ENCODE measurements at regions of chr20 and their contacts with region 1.

Region 1: DNA sequence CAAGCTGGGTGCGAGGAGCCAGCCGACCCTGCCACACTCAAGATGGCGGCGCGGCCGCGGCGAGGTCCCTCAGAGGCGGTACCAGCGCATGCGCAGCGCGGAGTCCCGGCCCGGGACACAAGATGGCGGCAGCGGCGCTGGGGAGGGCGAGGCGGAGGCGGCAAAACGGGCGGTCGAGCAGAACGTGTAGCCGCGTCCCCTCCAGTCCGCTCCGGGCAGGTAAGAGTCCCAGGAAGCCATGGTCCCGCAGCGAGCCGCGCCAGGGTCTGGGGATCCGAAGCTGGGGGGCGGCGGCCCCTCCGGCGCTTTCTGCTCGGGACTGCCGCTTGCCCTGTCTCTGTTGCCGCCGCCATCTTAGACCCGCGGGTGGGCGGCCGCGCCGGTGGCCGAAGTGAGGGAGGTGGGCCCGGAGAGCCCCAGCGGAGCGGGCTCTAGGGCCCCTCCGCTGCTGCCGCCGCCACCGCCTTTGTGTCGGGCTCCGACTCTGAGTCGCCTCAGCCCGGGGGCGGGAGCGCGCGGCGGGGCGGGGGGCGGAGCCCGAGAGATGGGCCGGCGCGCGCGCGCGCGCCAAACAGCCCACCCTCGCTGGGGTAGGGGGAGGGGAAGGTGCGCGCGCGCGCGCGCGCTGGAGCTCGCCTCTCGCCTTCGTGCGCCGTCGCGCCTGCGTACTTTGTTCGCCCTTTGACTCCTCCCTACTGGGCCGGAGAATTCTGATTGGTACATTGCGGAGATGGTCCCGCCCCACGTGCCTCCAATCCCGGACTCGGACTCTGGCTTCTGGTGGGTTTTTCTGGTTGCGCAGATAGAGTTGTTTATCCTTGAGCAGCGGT is at the start of gene PCIF1:
- DNase-seq: peak; percentile 98 to 99 (median 99)
- ATAC-seq: peak; percentile 90 to 91 (median 90)
- H3K4me3 ChIP-seq: peak within 1 kb of the TSS; percentile 79 to 100 (median 99)
- H3K27ac ChIP-seq: peak within 1 kb of the TSS; percentile 99 to 100 (median 100)
- H3K4me1 ChIP-seq: peaks cover 0 to 28% (median 20%) of the 10 kb centered on the region in 12 donors
- H3K27me3 ChIP-seq: no peaks in the 10 kb centered on the region
- CTCF ChIP-seq: peak in 1 of 12 donors; percentile 12
- POLR2A ChIP-seq: peak; percentile 26 to 93
- total RNA-seq, gene PCIF1: 22.2 to 40.2 (median 28.2) TPM

Region 2: DNA sequence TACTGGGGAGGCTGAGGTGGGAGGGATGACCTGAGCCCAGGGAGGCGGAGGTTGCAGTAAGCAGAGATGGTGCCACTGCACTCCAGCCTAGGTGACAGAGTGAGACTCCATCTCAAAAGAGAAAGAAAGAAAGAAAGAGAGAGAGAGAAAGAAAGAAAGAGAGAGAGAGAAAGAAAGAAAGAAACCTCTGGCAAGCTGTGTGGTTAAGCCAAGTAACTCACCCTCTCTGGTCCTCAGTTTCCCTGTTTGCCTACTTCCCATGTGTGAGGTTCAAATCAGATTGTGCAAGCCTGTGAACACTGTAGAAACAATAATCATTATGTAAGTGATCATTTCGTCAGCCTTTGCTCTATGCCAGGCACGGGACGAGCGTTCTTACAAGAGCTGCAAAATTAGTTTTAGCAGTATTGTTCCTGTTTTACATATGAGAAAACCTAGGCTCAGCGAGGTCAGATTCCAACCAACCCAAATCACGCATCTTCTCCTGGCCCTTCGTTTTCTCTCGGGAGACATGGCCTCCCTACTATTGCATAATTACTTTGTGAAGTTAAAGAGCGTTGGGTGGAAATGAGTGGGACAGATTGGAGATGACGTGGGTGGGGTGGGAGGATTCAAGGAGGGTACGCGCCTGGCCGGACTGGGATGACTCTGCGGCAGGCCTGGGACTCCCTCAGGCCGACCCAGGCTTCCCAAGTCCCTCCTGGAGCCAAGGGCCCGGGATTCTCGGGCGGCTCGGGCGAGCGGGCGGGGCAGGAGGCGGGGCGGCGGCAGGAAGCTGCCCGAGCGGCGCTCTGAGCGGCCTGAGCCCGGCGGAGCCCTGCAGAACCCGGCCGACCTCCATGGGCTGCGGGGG is 101.5 kb before region 1 on chr20 and contains the start of gene SNX21:
- intact Hi-C with region 1: loop called in 2 of 10 experiments (anchors 10 kb)
- DNase-seq: peak; percentile 88 to 95 (median 92)
- ATAC-seq: peak; percentile 84 to 92 (median 88)
- H3K4me3 ChIP-seq: peak within 1 kb of the TSS; percentile 54 to 90 (median 73)
- H3K27ac ChIP-seq: peak within 1 kb of the TSS; percentile 89 to 99 (median 95)
- H3K4me1 ChIP-seq: peaks cover 0 to 53% (median 36%) of the 10 kb centered on the region in 12 donors
- H3K27me3 ChIP-seq: no peaks in the 10 kb centered on the region
- CTCF ChIP-seq: no peak
- POLR2A ChIP-seq: peak in 1 of 2 donors; percentile 48
- total RNA-seq, gene SNX21: 14.1 to 45.6 (median 21.4) TPM

Region 3: GRCh38 chr20:45857114-45857881 is 77.5 kb before region 1 on chr20 and contains the starts of genes ACOT8 and ZSWIM3:
- intact Hi-C with region 1: loop called in 1 of 10 experiments (anchors 2 kb)
- DNase-seq: peak; percentile 89 to 100 (median 98)
- ATAC-seq: peak; percentile 97 to 100 (median 98)
- H3K4me3 ChIP-seq: peak within 1 kb of the TSS; percentile 69 to 98 (median 92)
- H3K27ac ChIP-seq: peak within 1 kb of the TSS; percentile 7 to 94 (median 84)
- H3K4me1 ChIP-seq: peaks cover 3 to 37% (median 31%) of the 10 kb centered on the region in 12 donors
- H3K27me3 ChIP-seq: no peaks in the 10 kb centered on the region
- CTCF ChIP-seq: no peak
- POLR2A ChIP-seq: peak in 1 of 2 donors; percentile 82
- total RNA-seq, gene ACOT8: 22.5 to 57.8 (median 31.4) TPM
- total RNA-seq, gene ZSWIM3: 1.9 to 3.1 (median 2.4) TPM

Region 4: GRCh38 chr20:45890985-45891983 is 43.5 kb before region 1 on chr20 and contains the starts of genes CTSA and NEURL2:
- intact Hi-C with region 1: loop called in 9 of 10 experiments (anchors 1 to 5 kb)
- DNase-seq: peak; percentile 93 to 97 (median 95)
- ATAC-seq: peak; percentile 77 to 91 (median 86)
- H3K4me3 ChIP-seq: peak within 1 kb of the TSS; percentile 53 to 98 (median 80)
- H3K27ac ChIP-seq: peak within 1 kb of the TSS; percentile 74 to 97 (median 90)
- H3K4me1 ChIP-seq: peaks cover 3 to 37% (median 23%) of the 10 kb centered on the region in 12 donors
- H3K27me3 ChIP-seq: no peaks in the 10 kb centered on the region
- CTCF ChIP-seq: peak in 2 of 12 donors; percentile 3 to 7
- POLR2A ChIP-seq: peak in 1 of 2 donors; percentile 68
- total RNA-seq, gene CTSA: 62.5 to 214 (median 129) TPM
- total RNA-seq, gene NEURL2: 3.5 to 14.8 (median 10.8) TPM

Region 5: DNA sequence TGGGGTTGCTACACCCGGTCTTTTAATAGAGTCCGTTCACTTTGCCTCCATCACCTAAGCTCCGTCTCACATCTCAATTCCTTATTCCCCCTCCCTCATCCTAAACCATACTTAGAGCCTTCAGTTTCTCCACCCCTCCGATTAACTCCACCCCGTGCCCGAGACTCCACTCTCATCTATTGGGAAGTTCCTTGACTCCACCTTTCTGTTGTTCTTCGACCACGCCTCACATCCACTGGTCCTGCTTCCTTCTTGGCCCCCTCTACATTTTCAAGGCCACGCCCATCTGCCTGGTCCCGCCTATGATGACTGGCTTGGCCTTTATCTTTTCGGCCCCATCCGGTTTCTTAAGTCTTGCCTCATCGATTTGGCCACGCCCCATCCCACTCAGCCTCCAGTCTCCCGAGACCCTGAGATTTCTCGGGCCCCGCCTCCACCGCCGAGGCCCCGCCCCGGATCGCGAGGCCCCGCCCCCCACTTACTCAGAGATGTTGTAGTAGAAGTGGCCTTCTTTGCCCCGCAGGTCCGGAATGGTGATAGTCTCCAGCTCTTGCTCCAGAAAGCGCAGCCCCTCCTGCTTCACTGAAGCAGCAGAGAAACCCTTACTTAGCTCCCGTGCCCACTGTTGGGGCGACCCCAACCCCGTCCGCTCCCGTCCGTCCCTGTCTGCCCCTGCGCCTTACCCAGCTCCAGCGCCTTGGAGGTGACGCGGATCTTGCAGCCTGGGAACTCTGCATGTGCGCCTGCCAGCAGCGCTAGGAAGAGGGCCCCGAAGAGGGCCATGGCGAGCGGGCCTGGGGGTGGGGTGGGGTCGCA is 23.9 kb before region 1 on chr20:
- intact Hi-C with region 1: loop called in 4 of 10 experiments (anchors 1 to 2 kb)
- DNase-seq: peak; percentile 96 to 97 (median 97)
- ATAC-seq: peak; percentile 82 to 94 (median 92)
- H3K4me3 ChIP-seq: peak overlapping the region; percentile 18 to 67 (median 60)
- H3K27ac ChIP-seq: peak overlapping the region; percentile 42 to 91 (median 80)
- H3K4me1 ChIP-seq: peaks cover 0 to 60% (median 18%) of the 10 kb centered on the region in 12 donors
- H3K27me3 ChIP-seq: peaks cover 0 to 5% (median 0%) of the 10 kb centered on the region in 9 donors
- CTCF ChIP-seq: no peak
- POLR2A ChIP-seq: peak in 1 of 2 donors; percentile 60

Region 6: DNA sequence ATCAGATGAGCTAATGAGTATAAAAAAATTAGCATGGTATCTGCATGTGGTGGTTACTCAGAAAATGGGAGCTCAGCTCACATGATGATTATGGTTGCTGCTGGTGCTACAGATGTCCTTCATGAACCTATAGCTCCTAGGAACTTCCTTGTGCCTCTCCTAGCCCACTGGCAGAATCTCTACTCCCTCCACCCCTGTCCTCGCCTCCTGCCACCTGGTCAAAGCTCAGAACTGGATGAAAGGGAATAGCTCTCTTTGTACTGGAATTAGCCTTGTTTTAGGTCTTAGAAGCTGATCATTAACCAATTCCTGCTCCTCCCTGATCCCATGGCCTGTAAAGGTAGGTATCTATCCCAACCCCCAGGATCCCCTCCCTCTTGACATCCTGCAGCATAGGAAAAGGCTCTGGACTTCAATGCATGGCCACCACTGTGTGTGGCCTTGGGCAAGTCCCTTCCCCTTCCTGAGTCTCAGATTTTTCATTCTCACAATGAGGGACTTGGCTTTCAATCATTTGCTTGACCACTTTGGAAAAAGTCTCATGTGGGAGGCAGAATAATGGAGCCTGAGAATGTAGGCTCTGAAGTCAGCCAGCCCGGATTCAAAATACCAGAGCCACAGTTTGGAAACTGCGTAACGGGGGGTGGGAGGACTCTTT is 672.5 kb after region 1 on chr20:
- intact Hi-C with region 1: no loop called
- DNase-seq: no peak
- ATAC-seq: no peak
- H3K4me3 ChIP-seq: no peak overlapping the region
- H3K27ac ChIP-seq: no peak overlapping the region
- H3K4me1 ChIP-seq: peaks cover 0 to 10% (median 0%) of the 10 kb centered on the region in 12 donors
- H3K27me3 ChIP-seq: no peaks in the 10 kb centered on the region
- CTCF ChIP-seq: no peak
- POLR2A ChIP-seq: no peak